Testis (tissue), 5 donors: ENCODE measurements at regions of chr13 and their contacts with region 1.

Region 1: DNA sequence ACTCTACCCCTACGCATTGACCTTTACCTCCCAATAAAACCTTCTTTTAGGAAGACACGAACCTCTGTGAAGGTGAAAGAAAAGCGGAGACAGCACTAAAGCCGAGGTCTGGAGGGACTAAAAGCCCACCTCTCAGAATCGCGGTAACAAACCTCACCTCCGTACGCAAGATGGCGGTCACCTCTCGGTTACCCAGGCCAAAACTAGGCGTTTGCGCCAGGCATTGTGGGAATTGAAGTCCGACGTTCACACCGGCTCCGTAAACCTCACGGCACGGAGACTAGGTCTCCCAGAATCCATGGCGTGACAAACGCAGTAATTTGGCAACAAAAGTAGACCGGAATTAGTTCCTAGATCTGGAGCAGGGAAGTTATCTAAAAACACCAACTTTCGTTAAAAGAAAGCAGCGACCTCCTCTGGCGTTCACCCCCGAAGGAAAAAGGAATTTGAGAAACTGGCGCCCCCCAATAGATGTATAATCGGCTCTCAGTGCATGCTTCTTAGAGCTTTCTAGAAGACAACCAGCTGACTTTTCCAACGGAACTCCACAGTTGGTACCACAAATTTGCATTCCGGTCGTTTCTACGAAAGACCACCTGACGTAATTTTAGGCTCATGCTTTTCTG is at the start of gene N4BP2L2:
- DNase-seq: peak; percentile 99
- H3K4me3 ChIP-seq: peak within 1 kb of the TSS; percentile 91 to 94
- H3K27ac ChIP-seq: peak within 1 kb of the TSS; percentile 98
- H3K4me1 ChIP-seq: peaks cover 9% of the 10 kb centered on the region
- H3K27me3 ChIP-seq: no peaks in the 10 kb centered on the region
- CTCF ChIP-seq: peak; percentile 46 to 77 (median 67)
- POLR2A ChIP-seq: no peak
- total RNA-seq, gene N4BP2L2: 187 to 197 TPM

Region 2: GRCh38 chr13:32381539-32381938 is 157.2 kb before region 1 on chr13:
- intact Hi-C with region 1: loop called (anchors 10 kb)
- DNase-seq: peak; percentile 58
- H3K4me3 ChIP-seq: no peak overlapping the region
- H3K27ac ChIP-seq: no peak overlapping the region
- H3K4me1 ChIP-seq: no peaks in the 10 kb centered on the region
- H3K27me3 ChIP-seq: no peaks in the 10 kb centered on the region
- CTCF ChIP-seq: peak; percentile 27 to 38 (median 36)
- POLR2A ChIP-seq: no peak